GM18951 (cell line): ENCODE measurements at regions of chr22 and their contacts with region 1.

Region 1: GRCh38 chr22:25702040-25702439 is 39.9 kb upstream of the MYO18B start:
- POLR2A ChIP-seq: no peak

Region 2: GRCh38 chr22:25172153-25172552 is 529.9 kb before region 1 on chr22:
- in situ Hi-C with region 1: no loop called
- POLR2A ChIP-seq: no peak

Region 3: GRCh38 chr22:25465949-25466348 is 236.1 kb before region 1 on chr22:
- in situ Hi-C with region 1: loop called (anchors 10 kb)
- POLR2A ChIP-seq: no peak

Region 4: GRCh38 chr22:25554238-25554671 is 147.8 kb before region 1 on chr22:
- in situ Hi-C with region 1: loop called (anchors 10 kb)
- POLR2A ChIP-seq: no peak